ENCODE measurements at regions of chr15 and their contacts with region 1.

Region 1: DNA sequence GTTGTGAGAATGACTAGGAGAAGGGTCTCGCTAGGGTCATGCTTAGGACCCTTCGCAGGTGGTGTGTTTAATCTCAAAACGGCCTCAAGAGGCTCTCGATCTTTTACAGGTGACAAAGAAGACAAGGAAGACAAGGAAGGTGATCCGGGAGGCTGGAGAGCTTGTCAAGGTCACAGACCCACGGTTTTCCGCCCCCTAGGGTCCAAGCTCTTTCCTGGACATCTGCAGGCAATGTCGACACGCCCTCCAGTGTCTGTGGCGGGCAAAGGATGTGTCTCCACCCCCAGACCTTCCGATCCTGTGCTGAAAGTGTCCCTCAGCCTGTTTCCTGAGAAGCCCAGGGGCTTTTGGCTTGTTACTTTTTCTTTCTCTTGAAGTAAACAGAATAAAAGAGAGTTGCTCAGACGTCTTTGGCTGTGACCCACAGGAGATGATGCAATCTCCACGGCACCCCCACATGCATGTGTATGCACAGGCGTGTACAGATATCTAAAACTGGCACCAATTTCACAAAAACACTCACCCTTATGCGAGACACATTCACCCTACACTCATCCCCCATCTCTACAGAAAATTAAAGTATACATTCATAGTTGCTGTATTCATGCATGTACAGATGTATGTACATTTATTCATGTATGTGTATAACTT is 108.8 kb downstream of the KLF13 start:
- DNase-seq: peak; percentile 59 to 91
- ATAC-seq: peak; percentile 78 to 93 (median 86)
- H3K4me3 ChIP-seq: peak overlapping the region; percentile 44
- H3K27ac ChIP-seq: peak overlapping the region; percentile 55
- H3K4me1 ChIP-seq: peaks cover 1% of the 10 kb centered on the region
- H3K27me3 ChIP-seq: no peaks in the 10 kb centered on the region
- CTCF ChIP-seq: peak; percentile 73

Region 2: DNA sequence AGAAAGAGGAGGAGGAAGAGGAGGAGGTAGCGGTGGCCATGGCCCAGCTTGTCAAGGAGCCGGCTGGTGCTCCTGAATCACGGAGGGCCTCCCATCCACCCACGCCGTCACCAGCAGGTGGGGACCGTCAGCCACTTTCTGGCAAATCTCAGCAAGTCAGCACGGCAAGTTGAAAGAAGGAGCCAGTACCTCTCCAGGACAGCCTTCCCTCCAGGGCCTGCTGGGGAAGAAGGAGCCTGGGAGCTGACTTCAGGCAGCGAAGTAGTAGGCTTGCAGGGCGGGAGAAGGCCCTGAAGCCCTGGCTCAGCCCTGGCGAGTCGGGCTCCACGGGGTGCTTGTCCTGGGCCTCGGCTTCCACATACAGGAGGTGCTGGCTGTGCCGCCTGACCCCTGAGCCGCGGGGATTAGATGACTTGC is 234.6 kb before region 1 on chr15:
- intact Hi-C with region 1: loop called (anchors 5 kb)
- DNase-seq: peak; percentile 65 to 81
- ATAC-seq: peak; percentile 72 to 98 (median 94)
- H3K4me3 ChIP-seq: no peak overlapping the region
- H3K27ac ChIP-seq: no peak overlapping the region
- H3K4me1 ChIP-seq: no peaks in the 10 kb centered on the region
- H3K27me3 ChIP-seq: no peaks in the 10 kb centered on the region
- CTCF ChIP-seq: peak; percentile 47

Region 3: GRCh38 chr15:31215490-31216214 is 219.7 kb before region 1 on chr15:
- intact Hi-C with region 1: loop called in 1 of 2 experiments (anchors 5 kb)
- DNase-seq: peak; percentile 76 to 93
- ATAC-seq: peak; percentile 88 to 89 (median 88)
- H3K4me3 ChIP-seq: peak overlapping the region; percentile 72
- H3K27ac ChIP-seq: peak overlapping the region; percentile 88
- H3K4me1 ChIP-seq: peaks cover 10% of the 10 kb centered on the region
- H3K27me3 ChIP-seq: no peaks in the 10 kb centered on the region
- CTCF ChIP-seq: peak; percentile 76

Region 4: DNA sequence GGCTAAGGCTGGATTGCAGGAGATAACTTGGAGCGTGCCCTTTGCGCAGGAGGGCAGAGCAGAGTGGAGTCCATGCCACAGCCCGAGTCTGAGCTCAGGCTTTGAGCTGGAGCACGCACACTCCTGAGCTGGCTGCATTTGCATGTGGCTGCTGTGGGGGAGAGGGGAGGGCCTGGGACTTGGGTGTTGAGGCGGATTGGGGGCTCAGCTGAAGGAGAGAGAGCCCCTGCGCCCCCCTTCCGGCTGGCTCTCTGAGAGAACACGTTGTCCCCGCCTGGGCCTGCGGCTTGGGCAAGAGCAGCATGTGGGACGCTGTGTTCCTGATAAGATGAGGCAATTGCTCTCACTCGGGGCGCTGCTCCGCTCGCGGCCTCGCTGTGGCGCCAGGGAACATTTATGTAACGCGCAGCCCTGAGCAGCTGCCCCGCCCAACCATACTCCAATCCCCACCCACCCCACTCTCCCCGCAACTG is 69.7 kb before region 1 on chr15:
- intact Hi-C with region 1: loop called (anchors 1 to 5 kb)
- DNase-seq: peak; percentile 88 to 98
- ATAC-seq: peak; percentile 86 to 94 (median 90)
- H3K4me3 ChIP-seq: peak overlapping the region; percentile 59
- H3K27ac ChIP-seq: peak overlapping the region; percentile 89
- H3K4me1 ChIP-seq: peaks cover 80% of the 10 kb centered on the region
- H3K27me3 ChIP-seq: no peaks in the 10 kb centered on the region
- CTCF ChIP-seq: peak; percentile 34

Region 5: GRCh38 chr15:31402511-31403056 is 32.8 kb before region 1 on chr15:
- intact Hi-C with region 1: loop called in 1 of 2 experiments (anchors 2 kb)
- DNase-seq: peak in 1 of 2 donors; percentile 83
- ATAC-seq: peak in 1 of 4 donors; percentile 54
- H3K4me3 ChIP-seq: no peak overlapping the region
- H3K27ac ChIP-seq: peak overlapping the region; percentile 17
- H3K4me1 ChIP-seq: peaks cover 11% of the 10 kb centered on the region
- H3K27me3 ChIP-seq: peaks cover 0 to 2% (median 0%) of the 10 kb centered on the region in 3 donors
- CTCF ChIP-seq: no peak

Region 6: GRCh38 chr15:31488426-31489204 is 53.2 kb after region 1 on chr15:
- intact Hi-C with region 1: loop called (anchors 2 to 5 kb)
- DNase-seq: peak in 1 of 2 donors; percentile 27
- ATAC-seq: peak; percentile 67 to 88 (median 74)
- H3K4me3 ChIP-seq: no peak overlapping the region
- H3K27ac ChIP-seq: no peak overlapping the region
- H3K4me1 ChIP-seq: peaks cover 13% of the 10 kb centered on the region
- H3K27me3 ChIP-seq: peaks cover 0 to 5% (median 0%) of the 10 kb centered on the region in 3 donors
- CTCF ChIP-seq: peak; percentile 76

Measured in psoas muscle (tissue), 8 donors.